GM12878 (cell line): ENCODE measurements at regions of chr16 and their contacts with region 1.

Region 1: DNA sequence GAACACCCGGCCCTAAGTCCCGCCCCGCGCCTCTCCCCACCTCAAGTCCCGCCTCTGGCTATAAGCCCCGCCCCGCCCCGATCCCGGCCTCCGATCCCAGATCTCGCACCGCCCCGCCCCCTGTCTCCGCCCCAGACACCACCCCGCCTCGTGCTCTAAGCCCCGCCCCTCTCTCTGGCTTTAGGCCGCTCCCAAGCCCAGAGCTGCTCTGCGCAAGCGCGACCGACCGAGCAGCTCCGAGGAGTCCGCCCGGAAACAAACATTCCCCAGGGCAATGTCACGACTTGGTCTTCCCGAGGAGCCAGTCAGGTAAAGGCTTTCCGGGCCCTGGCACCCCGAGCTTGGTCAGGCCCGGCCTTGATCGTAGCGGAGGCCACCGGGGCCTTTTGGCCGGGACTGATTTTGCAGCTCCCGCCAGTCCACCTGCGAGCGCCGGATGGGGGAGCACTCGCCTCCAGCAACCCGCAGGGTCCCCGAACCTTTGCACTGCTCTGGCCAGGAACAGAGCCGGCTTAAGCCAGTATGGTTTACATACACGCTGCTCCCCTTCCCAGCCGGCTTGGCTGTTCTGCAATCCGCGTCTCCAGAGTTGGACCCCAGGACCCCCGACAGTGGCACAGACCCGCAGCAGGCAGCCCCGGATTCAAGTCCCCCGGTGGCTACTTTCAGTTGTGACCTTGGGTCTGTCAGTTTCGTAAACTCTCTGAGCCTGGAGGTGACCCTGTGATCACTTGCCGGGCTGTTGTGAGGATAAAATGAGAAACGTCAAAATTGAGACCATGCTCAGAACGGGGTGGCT is at the start of gene NUDT7:
- DNase-seq: peak; percentile 76
- ATAC-seq: peak; percentile 98
- H3K4me3 ChIP-seq: peak within 1 kb of the TSS; percentile 98
- H3K27ac ChIP-seq: peak within 1 kb of the TSS; percentile 68
- H3K4me1 ChIP-seq: peaks cover 5% of the 10 kb centered on the region
- H3K27me3 ChIP-seq: no peaks in the 10 kb centered on the region
- CTCF ChIP-seq: peak in 2 of 3 experiments; percentile 20 to 21; a peak in 2 of 6 replicates
- EP300 ChIP-seq: no peak
- POLR2A ChIP-seq: peak; percentile 73
- RAD21 ChIP-seq: no peak
- polyA plus RNA-seq, gene NUDT7: 9.7 to 14.3 TPM

Region 2: DNA sequence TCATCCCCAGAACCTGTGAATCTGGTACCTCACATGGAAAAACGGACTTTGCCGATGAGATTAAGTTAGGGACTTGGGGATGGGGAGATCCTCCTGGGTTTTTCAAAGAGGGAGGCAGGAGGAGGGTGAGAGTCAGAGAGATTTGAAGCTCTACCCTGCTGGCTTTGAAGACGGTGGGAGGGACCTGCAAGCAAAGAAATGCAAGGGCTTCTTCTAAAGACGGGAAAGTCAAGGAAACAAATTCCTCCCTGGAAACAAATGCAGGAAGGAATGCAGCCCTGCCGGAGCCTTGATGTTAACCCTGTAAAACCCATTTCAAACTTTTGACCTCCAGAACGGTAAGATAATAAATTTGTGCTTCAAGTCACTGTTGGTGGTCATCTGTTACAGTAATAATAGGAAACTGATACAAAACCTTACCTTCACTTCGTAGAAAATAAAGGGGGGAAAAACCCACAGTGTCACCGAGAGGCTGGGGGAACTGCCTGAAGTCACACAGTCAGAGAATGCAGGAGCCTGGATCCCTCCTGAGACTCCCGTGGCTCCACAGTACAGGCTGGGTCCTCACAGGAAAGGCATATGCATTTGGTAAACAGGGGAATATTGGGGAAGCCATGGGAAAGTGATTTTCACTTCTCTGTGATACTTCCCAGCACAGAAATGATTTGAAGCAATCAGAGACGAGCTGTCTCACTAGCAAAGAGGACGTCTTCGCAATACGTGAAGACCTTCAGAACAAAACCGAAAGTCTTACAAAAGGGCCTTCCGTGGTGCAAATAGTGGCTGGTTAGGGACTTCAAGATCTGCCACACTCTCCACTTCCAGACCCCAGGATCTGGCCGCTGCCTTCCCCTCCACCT is 240.9 kb after region 1 on chr16:
- CTCF ChIA-PET with region 1: no interaction called
- POLR2A ChIA-PET with region 1: no interaction called
- RAD21 ChIA-PET with region 1: no interaction called
- SMC1A ChIA-PET with region 1: no interaction called
- in situ Hi-C with region 1: no loop called
- intact Hi-C with region 1: loop called (anchors 1 kb)
- DNase-seq: peak; percentile 52
- ATAC-seq: peak; percentile 90
- H3K4me3 ChIP-seq: peak overlapping the region; percentile 46; the same call in 1 of the 2 replicates
- H3K27ac ChIP-seq: peak overlapping the region; percentile 89
- H3K4me1 ChIP-seq: peaks cover 14% of the 10 kb centered on the region
- H3K27me3 ChIP-seq: no peaks in the 10 kb centered on the region
- CTCF ChIP-seq: no peak
- EP300 ChIP-seq: 0 out of 4 replicates have a peak, but pooled peaks of 1 of the 2 experiments have one; percentile 6
- POLR2A ChIP-seq: no peak; the same call in 1 of the 2 replicates
- RAD21 ChIP-seq: no peak